ENCODE measurements at regions of chr13 and their contacts with region 1.

Region 1: DNA sequence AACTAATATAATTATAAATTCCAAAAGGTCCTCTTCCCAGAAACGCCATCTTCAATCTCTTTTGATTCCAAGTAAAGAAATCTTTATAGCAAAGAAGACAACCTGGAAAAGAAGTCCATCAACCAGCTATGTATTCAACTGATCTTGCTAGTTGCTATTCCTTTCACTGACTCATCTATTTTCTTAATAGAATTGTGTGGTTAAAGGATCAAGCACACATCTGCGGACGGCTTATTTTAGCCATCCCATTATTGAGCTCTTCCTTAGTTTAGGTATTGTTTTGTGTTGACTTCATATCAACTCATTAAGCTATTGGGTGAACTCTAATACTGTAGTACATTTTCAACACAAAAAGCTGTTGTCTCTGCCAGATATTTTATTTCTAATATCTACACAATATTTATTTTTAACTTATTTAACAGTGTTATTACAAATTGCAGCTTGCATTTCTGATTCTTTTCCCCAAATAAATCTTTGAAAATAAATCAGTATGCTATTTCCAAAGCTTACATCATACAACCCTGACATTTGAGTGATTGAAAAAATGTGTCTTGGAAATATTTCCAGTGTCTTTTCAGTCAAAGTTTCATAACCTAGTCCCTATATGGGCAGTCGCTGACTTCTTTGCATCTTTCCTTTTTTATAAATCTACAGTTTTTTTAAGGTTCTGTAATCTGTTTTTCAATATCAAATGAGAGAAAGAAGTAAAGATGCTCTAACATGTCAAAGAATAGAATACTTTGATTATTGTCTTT is 158.8 kb upstream of the SPRY2 start:
- DNase-seq: no peak

Region 2: GRCh38 chr13:80389073-80390038 is 110.4 kb before region 1 on chr13:
- intact Hi-C with region 1: loop called in 1 of 2 experiments (anchors 5 kb)
- DNase-seq: no peak

Region 3: GRCh38 chr13:80787604-80788003 is 287.9 kb after region 1 on chr13:
- intact Hi-C with region 1: no loop called
- DNase-seq: no peak

Measured in posterior vena cava (tissue), 2 donors.